Activated CD8-positive, alpha-beta T cell treated with anti-CD3 and anti-CD28 coated beads for 36 hours (primary cell): ENCODE measurements at regions of chr10 and their contacts with region 1.

Region 1: GRCh38 chr10:62594093-62594520 is 210.4 kb upstream of the ADO start:
- DNase-seq: peak; percentile 65
- ATAC-seq: peak; percentile 84
- H3K4me3 Mint-ChIP-seq: no peak overlapping the region
- H3K27ac Mint-ChIP-seq: peak overlapping the region; percentile 6
- H3K4me1 Mint-ChIP-seq: peaks cover 10% of the 10 kb centered on the region
- H3K27me3 Mint-ChIP-seq: peaks cover 5% of the 10 kb centered on the region
- CTCF ChIP-seq: peak; percentile 98

Region 2: GRCh38 chr10:62437696-62438095 is 156.4 kb before region 1 on chr10:
- CTCF ChIA-PET with region 1: interaction called, 3 read pairs
- POLR2A ChIA-PET with region 1: no interaction called
- intact Hi-C with region 1: loop called (anchors 5 kb)
- DNase-seq: no peak
- ATAC-seq: peak; percentile 63
- H3K4me3 Mint-ChIP-seq: no peak overlapping the region
- H3K27ac Mint-ChIP-seq: no peak overlapping the region
- H3K4me1 Mint-ChIP-seq: peaks cover 19% of the 10 kb centered on the region
- H3K27me3 Mint-ChIP-seq: peaks cover 6% of the 10 kb centered on the region
- CTCF ChIP-seq: peak; percentile 78

Region 3: DNA sequence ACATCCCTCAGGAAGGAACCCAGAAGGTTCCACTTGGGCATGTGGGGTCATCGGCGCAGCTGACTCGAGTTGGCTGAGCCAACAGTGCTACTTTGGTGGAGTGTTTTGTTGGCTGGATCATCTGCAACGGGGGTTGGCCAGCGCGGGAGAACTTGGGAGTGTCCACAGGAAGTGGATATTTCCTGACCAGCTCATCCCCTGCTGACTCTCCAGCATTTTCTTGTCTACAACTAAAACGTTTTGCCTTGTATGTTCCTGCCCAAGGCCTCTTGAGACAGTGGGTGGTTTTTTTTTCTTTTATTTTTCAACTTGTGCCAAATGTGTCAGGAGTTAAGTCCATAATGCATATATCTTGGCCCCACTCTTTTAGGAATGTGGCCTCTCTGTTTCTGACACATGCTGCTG is 11.3 kb before region 1 on chr10:
- CTCF ChIA-PET with region 1: interaction called, 17 read pairs
- POLR2A ChIA-PET with region 1: no interaction called
- intact Hi-C with region 1: no loop called
- DNase-seq: no peak
- ATAC-seq: no peak
- H3K4me3 Mint-ChIP-seq: no peak overlapping the region
- H3K27ac Mint-ChIP-seq: no peak overlapping the region
- H3K4me1 Mint-ChIP-seq: peaks cover 9% of the 10 kb centered on the region
- H3K27me3 Mint-ChIP-seq: no peaks in the 10 kb centered on the region
- CTCF ChIP-seq: no peak

Region 4: GRCh38 chr10:63003816-63004453 is 409.8 kb after region 1 on chr10:
- CTCF ChIA-PET with region 1: no interaction called
- POLR2A ChIA-PET with region 1: no interaction called
- intact Hi-C with region 1: loop called (anchors 10 kb)
- DNase-seq: no peak
- ATAC-seq: no peak
- H3K4me3 Mint-ChIP-seq: no peak overlapping the region
- H3K27ac Mint-ChIP-seq: no peak overlapping the region
- H3K4me1 Mint-ChIP-seq: peaks cover 5% of the 10 kb centered on the region
- H3K27me3 Mint-ChIP-seq: peaks cover 37% of the 10 kb centered on the region
- CTCF ChIP-seq: peak; percentile 25

Region 5: GRCh38 chr10:63157845-63158624 is 563.9 kb after region 1 on chr10:
- CTCF ChIA-PET with region 1: interaction called, 5 read pairs
- POLR2A ChIA-PET with region 1: no interaction called
- intact Hi-C with region 1: loop called (anchors 5 kb)
- DNase-seq: peak; percentile 41
- ATAC-seq: peak; percentile 85
- H3K4me3 Mint-ChIP-seq: no peak overlapping the region
- H3K27ac Mint-ChIP-seq: no peak overlapping the region
- H3K4me1 Mint-ChIP-seq: peaks cover 4% of the 10 kb centered on the region
- H3K27me3 Mint-ChIP-seq: no peaks in the 10 kb centered on the region
- CTCF ChIP-seq: peak; percentile 93